ENCODE measurements at regions of chr1 and their contacts with region 1.

Region 1: DNA sequence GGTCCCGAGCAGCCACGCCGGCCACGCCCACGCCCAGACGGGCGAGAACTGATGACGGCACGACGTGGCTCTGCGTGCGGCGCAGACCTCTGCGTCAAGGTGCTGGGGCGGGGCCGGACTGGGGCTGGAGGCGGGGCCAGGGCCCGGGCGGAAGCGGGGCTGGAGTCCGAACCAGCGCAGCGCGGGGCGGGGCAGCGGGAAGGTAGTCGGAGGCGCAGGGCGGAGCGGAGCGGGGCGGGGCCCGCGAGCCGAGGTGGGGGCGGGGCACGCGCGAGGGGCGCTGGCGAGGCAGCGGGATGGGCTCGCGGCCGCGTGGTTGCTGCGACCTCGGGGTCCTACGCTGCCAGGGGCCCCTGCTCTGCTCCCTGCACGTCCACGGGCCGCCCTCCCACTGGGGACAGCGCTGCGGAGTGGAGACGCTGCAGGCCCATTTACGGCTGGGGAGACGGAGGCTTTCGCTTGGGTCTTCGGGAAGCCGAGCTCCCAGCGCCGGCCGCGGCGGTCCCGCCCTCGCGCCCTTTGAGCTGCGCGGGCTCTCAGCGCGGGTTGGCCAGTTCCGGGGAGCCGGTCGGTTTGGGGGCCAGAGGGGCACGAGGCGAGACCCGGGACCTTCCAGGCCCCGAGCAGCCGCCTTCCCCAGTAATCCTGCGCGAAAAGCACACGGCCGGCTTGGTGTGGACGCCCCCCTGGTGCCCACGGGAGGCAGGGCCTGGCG is at the start of gene PEX10:
- DNase-seq: peak; percentile 96 to 100 (median 98)
- ATAC-seq: peak; percentile 78 to 88
- H3K4me3 Mint-ChIP-seq: peak within 1 kb of the TSS; percentile 77 to 91 (median 86)
- H3K27ac Mint-ChIP-seq: peak within 1 kb of the TSS; percentile 55 to 96 (median 87)
- H3K4me1 Mint-ChIP-seq: peaks cover 27 to 54% (median 41%) of the 10 kb centered on the region in 4 donors
- H3K27me3 Mint-ChIP-seq: no peaks in the 10 kb centered on the region
- polyA plus RNA-seq, gene PEX10: 7.5 to 10.4 (median 9.1) TPM

Region 2: GRCh38 chr1:2391041-2391930 is 21.4 kb before region 1 on chr1 and contains the starts of genes MORN1 and RER1:
- POLR2A ChIA-PET with region 1: interaction called, 15 read pairs
- DNase-seq: peak; percentile 90 to 100 (median 99)
- ATAC-seq: peak; percentile 95 to 96
- H3K4me3 Mint-ChIP-seq: peak within 1 kb of the TSS; percentile 82 to 94 (median 90)
- H3K27ac Mint-ChIP-seq: peak within 1 kb of the TSS; percentile 87 to 94 (median 92)
- H3K4me1 Mint-ChIP-seq: peaks cover 22 to 43% (median 37%) of the 10 kb centered on the region in 4 donors
- H3K27me3 Mint-ChIP-seq: no peaks in the 10 kb centered on the region
- polyA plus RNA-seq, gene MORN1: 4.3 to 7.1 (median 5.0) TPM
- polyA plus RNA-seq, gene RER1: 118 to 146 (median 126) TPM

Region 3: DNA sequence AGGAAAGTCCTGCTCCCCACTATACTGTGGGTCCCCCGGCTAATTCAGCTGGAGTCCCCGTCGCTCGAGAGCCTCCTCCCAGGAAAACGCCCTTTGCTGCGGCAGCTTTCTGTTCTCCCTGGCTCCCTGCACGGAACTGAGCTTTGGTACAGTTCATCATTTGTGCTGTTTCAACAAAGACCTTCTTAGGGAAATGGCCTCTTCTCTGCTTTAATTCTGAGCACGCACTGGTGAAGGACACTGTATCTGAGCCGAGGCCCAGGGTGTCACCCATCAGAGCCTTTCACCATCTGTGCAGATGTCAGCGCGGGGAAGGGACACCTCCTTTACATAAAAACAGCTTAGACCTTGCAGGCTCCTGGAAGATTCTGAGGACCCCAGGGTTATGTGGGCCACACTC is 13.2 kb after region 1 on chr1:
- POLR2A ChIA-PET with region 1: interaction called, 14 read pairs
- DNase-seq: no peak
- ATAC-seq: no peak
- H3K4me3 Mint-ChIP-seq: no peak overlapping the region
- H3K27ac Mint-ChIP-seq: no peak overlapping the region
- H3K4me1 Mint-ChIP-seq: peaks cover 0 to 5% (median 4%) of the 10 kb centered on the region in 4 donors
- H3K27me3 Mint-ChIP-seq: no peaks in the 10 kb centered on the region

Region 4: GRCh38 chr1:2494323-2494693 is 81.6 kb after region 1 on chr1:
- POLR2A ChIA-PET with region 1: interaction called, 18 read pairs
- DNase-seq: no peak
- ATAC-seq: no peak
- H3K4me3 Mint-ChIP-seq: peak overlapping the region in 7 of 10 donors; percentile 55 to 80 (median 72)
- H3K27ac Mint-ChIP-seq: peak overlapping the region; percentile 82 to 95 (median 92)
- H3K4me1 Mint-ChIP-seq: peaks cover 20 to 63% (median 38%) of the 10 kb centered on the region in 4 donors
- H3K27me3 Mint-ChIP-seq: no peaks in the 10 kb centered on the region

Region 5: DNA sequence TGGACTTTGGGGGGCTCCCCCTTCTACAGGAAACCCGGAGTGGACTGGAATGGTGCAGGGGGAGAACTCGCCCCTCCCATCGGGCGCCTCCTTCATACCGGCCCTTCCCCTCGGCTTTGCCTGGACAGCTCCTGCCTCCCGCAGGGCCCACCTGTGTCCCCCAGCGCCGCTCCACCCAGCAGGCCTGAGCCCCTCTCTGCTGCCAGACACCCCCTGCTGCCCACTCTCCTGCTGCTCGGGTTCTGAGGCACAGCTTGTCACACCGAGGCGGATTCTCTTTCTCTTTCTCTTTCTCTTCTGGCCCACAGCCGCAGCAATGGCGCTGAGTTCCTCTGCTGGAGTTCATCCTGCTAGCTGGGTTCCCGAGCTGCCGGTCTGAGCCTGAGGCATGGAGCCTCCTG is 143.6 kb after region 1 on chr1 and contains the start of gene TNFRSF14:
- POLR2A ChIA-PET with region 1: interaction called, 22 read pairs
- DNase-seq: peak; percentile 53 to 87 (median 74)
- ATAC-seq: peak; percentile 73 to 79
- H3K4me3 Mint-ChIP-seq: peak within 1 kb of the TSS; percentile 91 to 99 (median 98)
- H3K27ac Mint-ChIP-seq: peak within 1 kb of the TSS; percentile 93 to 99 (median 98)
- H3K4me1 Mint-ChIP-seq: peaks cover 28 to 62% (median 44%) of the 10 kb centered on the region in 4 donors
- H3K27me3 Mint-ChIP-seq: no peaks in the 10 kb centered on the region
- polyA plus RNA-seq, gene TNFRSF14: 45.8 to 61.6 (median 48.9) TPM